Activated B cell treated with CpG ODN at 0.5 μM for 24 hours (primary cell): ENCODE measurements at regions of chr1 and their contacts with region 1.

Region 1: DNA sequence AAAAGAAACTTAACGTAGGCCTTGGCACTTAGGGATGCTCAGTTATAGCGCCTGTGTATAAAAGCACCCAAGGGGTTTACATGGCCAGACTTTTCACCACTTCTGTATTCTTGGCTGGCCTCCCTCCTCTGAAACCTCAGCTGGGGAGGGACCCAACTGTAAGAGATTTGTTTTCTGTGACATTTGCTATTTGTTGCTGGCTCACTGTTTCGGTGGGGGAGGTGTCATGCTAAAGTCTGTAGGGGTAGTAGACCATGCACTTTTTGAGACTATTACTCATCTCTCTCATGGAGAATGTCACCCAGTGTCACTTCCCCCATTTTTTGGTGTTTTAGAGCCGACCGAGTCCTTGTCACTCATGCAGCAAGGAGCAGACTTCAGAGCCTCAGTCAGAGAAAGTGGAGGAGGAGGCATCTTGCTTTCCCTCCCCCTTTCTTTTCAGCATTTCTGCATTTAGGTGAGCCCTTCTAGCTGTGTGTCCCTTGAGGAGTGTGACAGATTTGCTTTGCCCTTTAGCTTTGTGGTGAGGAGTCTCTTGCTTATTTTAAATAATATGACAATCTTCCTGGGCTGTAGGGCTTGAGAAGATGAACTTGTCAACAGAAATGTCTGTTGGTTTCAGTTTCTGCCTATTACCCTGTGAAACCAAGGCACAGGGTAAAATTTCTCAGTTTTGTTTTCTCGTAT is 160.1 kb downstream of the FASLG start:
- DNase-seq: peak; percentile 45
- ATAC-seq: peak; percentile 84
- H3K4me3 Mint-ChIP-seq: peak overlapping the region; percentile 77
- H3K27ac Mint-ChIP-seq: peak overlapping the region; percentile 96
- H3K4me1 Mint-ChIP-seq: peaks cover 47% of the 10 kb centered on the region
- H3K27me3 Mint-ChIP-seq: no peaks in the 10 kb centered on the region
- CTCF ChIP-seq: no peak

Region 2: DNA sequence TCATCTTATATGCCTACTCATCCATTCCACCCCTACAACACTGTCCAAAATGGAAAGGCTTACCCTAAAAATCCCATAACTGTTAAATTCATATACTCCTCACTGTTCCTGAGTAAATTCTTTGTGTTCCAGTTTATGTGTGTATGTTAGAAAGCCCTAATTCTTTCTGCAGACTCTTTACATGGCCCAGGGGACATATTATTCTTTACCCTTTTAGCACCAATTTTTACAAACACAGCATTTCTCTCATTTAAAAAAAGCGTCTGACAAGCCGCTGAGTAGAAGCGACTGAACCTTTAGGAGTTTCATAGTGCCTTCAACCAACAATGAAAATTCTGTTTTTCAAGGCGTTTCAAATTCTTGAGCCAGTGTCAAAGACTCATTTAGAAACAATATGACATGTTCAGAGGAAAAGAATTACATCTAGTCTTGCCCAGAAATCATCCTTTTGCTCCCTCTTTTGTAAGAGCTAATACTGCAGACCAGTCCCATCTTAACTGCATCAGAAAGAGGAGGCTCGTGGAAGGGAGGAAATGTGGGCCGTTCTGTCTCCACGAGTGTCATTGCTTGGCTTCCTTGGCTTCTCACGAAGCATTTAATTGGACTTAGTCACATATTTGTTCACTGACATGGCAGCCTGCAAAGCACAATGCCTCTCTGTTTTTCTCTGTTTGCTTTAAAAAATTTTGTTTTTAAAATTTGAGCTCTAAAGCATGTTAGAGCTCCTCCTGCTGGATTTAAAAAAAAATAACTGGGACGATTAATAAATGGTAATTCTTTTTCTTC is 419.8 kb before region 1 on chr1:
- CTCF ChIA-PET with region 1: no interaction called
- POLR2A ChIA-PET with region 1: interaction called, 3 read pairs
- intact Hi-C with region 1: loop called (anchors 5 kb)
- DNase-seq: no peak
- ATAC-seq: peak; percentile 50
- H3K4me3 Mint-ChIP-seq: peak overlapping the region; percentile 73
- H3K27ac Mint-ChIP-seq: peak overlapping the region; percentile 90
- H3K4me1 Mint-ChIP-seq: peaks cover 62% of the 10 kb centered on the region
- H3K27me3 Mint-ChIP-seq: no peaks in the 10 kb centered on the region
- CTCF ChIP-seq: no peak

Region 3: GRCh38 chr1:172778456-172779455 is 40.2 kb before region 1 on chr1:
- CTCF ChIA-PET with region 1: interaction called, 27 read pairs
- POLR2A ChIA-PET with region 1: interaction called, 25 read pairs
- intact Hi-C with region 1: loop called (anchors 1 kb)
- DNase-seq: no peak
- ATAC-seq: peak; percentile 82
- H3K4me3 Mint-ChIP-seq: no peak overlapping the region
- H3K27ac Mint-ChIP-seq: no peak overlapping the region
- H3K4me1 Mint-ChIP-seq: peaks cover 29% of the 10 kb centered on the region
- H3K27me3 Mint-ChIP-seq: no peaks in the 10 kb centered on the region
- CTCF ChIP-seq: no peak

Region 4: DNA sequence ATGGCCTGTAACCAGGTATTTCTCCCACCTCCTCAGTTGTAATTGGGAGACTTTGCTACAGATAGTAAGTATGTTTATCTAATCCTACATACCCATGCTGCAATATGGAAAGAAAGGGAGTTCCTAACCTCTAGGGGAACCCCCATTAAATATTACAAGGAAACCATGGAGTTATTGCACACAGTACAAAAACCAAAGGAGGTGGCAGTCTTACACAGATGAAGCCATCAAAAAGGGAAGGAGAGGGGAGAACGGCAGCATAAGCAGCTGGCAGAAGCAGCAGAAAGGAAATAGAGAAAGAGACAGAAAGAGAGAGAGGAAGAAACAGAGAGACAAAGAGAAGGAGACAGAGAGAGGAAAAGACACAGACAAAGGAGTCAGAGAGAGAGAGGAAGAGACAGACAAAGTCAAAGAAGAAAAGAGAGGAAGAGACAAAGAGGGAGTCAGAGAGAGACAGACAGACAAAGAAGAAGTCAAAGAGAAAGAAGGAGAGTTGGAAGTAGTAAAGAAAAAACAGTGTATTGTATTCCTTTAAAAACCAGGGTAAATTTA is 17.1 kb before region 1 on chr1:
- CTCF ChIA-PET with region 1: no interaction called
- POLR2A ChIA-PET with region 1: no interaction called
- intact Hi-C with region 1: no loop called
- DNase-seq: no peak
- ATAC-seq: no peak
- H3K4me3 Mint-ChIP-seq: no peak overlapping the region
- H3K27ac Mint-ChIP-seq: no peak overlapping the region
- H3K4me1 Mint-ChIP-seq: peaks cover 1% of the 10 kb centered on the region
- H3K27me3 Mint-ChIP-seq: no peaks in the 10 kb centered on the region
- CTCF ChIP-seq: no peak

Region 5: GRCh38 chr1:173112129-173112528 is 293.1 kb after region 1 on chr1:
- CTCF ChIA-PET with region 1: no interaction called
- POLR2A ChIA-PET with region 1: no interaction called
- intact Hi-C with region 1: loop called (anchors 1 kb)
- DNase-seq: no peak
- ATAC-seq: peak; percentile 90
- H3K4me3 Mint-ChIP-seq: peak overlapping the region; percentile 8
- H3K27ac Mint-ChIP-seq: peak overlapping the region; percentile 46
- H3K4me1 Mint-ChIP-seq: peaks cover 39% of the 10 kb centered on the region
- H3K27me3 Mint-ChIP-seq: no peaks in the 10 kb centered on the region
- CTCF ChIP-seq: no peak

Region 6: DNA sequence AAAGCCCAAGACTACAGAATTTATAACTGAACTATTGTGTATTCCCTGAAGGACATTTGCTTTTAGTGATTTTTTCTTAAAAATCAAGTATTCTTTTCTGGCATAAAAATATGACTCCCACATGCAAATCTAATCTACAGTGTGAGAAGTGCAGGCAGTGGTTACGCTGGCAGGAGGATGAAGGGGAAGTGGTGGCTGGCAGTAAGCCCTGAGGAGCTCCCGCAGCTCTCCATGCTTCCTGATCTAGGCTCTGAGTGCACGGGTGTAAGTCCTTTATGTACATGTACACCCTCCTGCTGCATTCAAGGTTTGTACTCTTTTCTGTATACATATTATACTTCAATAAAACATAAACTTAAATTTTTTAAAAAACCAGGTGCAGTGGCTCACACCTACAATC is 590.6 kb after region 1 on chr1:
- CTCF ChIA-PET with region 1: no interaction called
- POLR2A ChIA-PET with region 1: interaction called, 38 read pairs
- intact Hi-C with region 1: loop called (anchors 1 kb)
- DNase-seq: no peak
- ATAC-seq: peak; percentile 25
- H3K4me3 Mint-ChIP-seq: peak overlapping the region; percentile 81
- H3K27ac Mint-ChIP-seq: peak overlapping the region; percentile 95
- H3K4me1 Mint-ChIP-seq: peaks cover 91% of the 10 kb centered on the region
- H3K27me3 Mint-ChIP-seq: no peaks in the 10 kb centered on the region
- CTCF ChIP-seq: no peak

Region 7: DNA sequence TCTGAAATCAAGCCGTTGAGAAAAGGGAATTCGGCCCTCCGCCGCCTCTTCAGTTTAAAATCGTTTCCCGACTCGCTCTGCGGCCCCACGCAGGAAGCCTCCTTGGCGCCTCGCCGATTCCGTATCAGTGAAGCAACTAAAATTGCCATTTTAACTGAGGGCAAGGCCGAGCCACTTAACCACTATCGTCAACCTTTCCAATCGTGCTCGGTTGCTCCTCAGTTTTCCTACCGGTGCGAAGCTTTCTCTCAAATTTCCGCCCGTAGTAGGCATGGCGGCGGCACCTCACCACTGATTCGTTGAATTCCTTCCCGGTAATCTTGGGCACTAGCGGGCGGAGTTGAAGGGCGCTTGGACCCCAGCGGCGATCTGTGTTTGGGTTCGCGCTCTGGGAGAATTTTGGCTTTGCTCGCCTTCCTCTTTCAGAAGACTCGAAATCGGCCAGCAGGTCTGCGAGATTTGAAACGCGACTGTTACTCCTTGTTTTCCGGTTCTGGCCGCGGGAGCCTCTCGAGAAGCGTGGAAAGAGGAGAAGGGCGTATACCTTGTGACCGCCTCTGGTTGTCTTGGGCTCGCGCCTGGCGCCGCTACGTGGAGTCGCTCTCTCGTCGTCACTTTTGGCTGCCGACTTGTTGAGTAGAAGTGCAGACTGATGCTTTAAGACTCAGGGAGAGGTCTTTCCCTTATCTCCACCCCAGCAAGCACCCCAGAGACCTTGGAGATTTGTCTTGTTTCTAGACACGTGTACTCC is 1005.5 kb after region 1 on chr1 and contains the starts of genes CENPL and DARS2:
- CTCF ChIA-PET with region 1: no interaction called
- POLR2A ChIA-PET with region 1: interaction called, 5 read pairs
- intact Hi-C with region 1: loop called (anchors 1 kb)
- DNase-seq: peak; percentile 80
- ATAC-seq: peak; percentile 89
- H3K4me3 Mint-ChIP-seq: peak within 1 kb of the TSS; percentile 95
- H3K27ac Mint-ChIP-seq: peak within 1 kb of the TSS; percentile 97
- H3K4me1 Mint-ChIP-seq: peaks cover 28% of the 10 kb centered on the region
- H3K27me3 Mint-ChIP-seq: no peaks in the 10 kb centered on the region
- CTCF ChIP-seq: no peak
- total RNA-seq, gene CENPL: 12.7 and 14.0 TPM in 2 replicates
- total RNA-seq, gene DARS2: 24.0 and 26.0 TPM in 2 replicates

Region 8: GRCh38 chr1:174262349-174263241 is 1443.6 kb after region 1 on chr1:
- CTCF ChIA-PET with region 1: no interaction called
- POLR2A ChIA-PET with region 1: no interaction called
- intact Hi-C with region 1: loop called (anchors 5 kb)
- DNase-seq: no peak
- ATAC-seq: peak; percentile 70
- H3K4me3 Mint-ChIP-seq: no peak overlapping the region
- H3K27ac Mint-ChIP-seq: no peak overlapping the region
- H3K4me1 Mint-ChIP-seq: peaks cover 25% of the 10 kb centered on the region
- H3K27me3 Mint-ChIP-seq: no peaks in the 10 kb centered on the region
- CTCF ChIP-seq: no peak